Caco-2 (cell line): ENCODE measurements at regions of chr7 and their contacts with region 1.

Region 1: DNA sequence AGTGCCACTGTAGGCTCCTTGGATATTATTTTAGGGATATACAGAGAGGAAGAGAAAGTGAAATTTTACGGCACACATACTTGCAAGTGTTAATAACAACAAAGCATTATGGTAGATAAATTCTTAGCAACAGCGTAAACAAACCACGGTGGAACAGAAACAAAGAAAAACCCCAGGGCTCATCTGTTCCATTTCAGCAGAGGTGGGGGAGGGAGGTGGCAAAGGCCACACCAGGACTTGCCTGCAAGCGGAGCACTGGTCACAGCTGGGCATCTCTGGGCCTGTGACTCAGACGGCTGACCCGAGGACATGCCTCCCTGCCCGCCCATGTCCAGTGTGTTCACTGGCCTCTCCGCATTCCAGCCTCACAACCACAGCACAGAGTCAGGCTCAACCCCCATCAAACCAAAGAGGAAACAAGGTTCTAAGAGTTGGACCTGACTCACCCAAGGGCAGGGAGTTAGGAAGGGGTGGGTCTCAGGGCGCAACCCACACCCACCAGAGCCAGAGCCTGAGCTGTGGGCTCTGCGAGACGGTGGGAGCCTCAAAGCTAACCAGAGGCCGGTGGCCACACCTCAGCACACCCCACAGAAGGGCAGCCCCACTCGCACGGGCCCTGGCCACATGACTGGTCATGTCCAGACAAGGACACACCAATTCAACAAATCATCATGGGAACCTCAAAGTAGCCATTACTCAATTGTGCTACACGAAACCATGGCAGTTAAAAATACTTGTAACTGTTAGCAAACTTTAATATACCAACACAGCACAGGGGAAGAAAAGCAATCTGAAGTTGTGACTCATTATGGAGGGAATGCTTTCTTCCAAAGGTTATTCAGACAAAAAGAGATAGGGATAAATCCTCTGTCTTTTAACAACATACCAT is 10.7 kb downstream of the ESYT2 start:
- DNase-seq: peak; percentile 89 to 93
- H3K4me3 ChIP-seq: peak overlapping the region; percentile 6; the same call in 1 of the 2 replicates
- H3K4me3 Mint-ChIP-seq: peak overlapping the region; percentile 55
- H3K27ac Mint-ChIP-seq: peak overlapping the region; percentile 94
- H3K4me1 ChIP-seq: peaks cover 70% of the 10 kb centered on the region
- H3K4me1 Mint-ChIP-seq: peaks cover 71% of the 10 kb centered on the region
- H3K27me3 ChIP-seq: no peaks in the 10 kb centered on the region
- H3K27me3 Mint-ChIP-seq: no peaks in the 10 kb centered on the region
- CTCF ChIP-seq: no peak

Region 2: GRCh38 chr7:158782761-158783401 is 35.7 kb before region 1 on chr7:
- CTCF ChIA-PET with region 1: interaction called, 3 read pairs
- POLR2A ChIA-PET with region 1: no interaction called
- intact Hi-C with region 1: loop called (anchors 5 kb)
- DNase-seq: peak; percentile 46 to 50
- H3K4me3 ChIP-seq: no peak overlapping the region
- H3K4me3 Mint-ChIP-seq: no peak overlapping the region
- H3K27ac Mint-ChIP-seq: no peak overlapping the region
- H3K4me1 ChIP-seq: peaks cover 16% of the 10 kb centered on the region
- H3K4me1 Mint-ChIP-seq: no peaks in the 10 kb centered on the region
- H3K27me3 ChIP-seq: no peaks in the 10 kb centered on the region
- H3K27me3 Mint-ChIP-seq: no peaks in the 10 kb centered on the region
- CTCF ChIP-seq: peak in 1 of 2 experiments; percentile 31

Region 3: GRCh38 chr7:158802473-158803202 is 15.9 kb before region 1 on chr7:
- CTCF ChIA-PET with region 1: no interaction called
- POLR2A ChIA-PET with region 1: no interaction called
- intact Hi-C with region 1: loop called (anchors 2 kb)
- DNase-seq: no peak
- H3K4me3 ChIP-seq: no peak overlapping the region
- H3K4me3 Mint-ChIP-seq: peak overlapping the region; percentile 24
- H3K27ac Mint-ChIP-seq: peak overlapping the region; percentile 83
- H3K4me1 ChIP-seq: peaks cover 22% of the 10 kb centered on the region
- H3K4me1 Mint-ChIP-seq: no peaks in the 10 kb centered on the region
- H3K27me3 ChIP-seq: no peaks in the 10 kb centered on the region
- H3K27me3 Mint-ChIP-seq: no peaks in the 10 kb centered on the region
- CTCF ChIP-seq: no peak

Region 4: GRCh38 chr7:158829342-158830210 is 11.0 kb after region 1 on chr7 and contains the start of gene ESYT2:
- CTCF ChIA-PET with region 1: interaction called, 3 read pairs
- POLR2A ChIA-PET with region 1: interaction called, 4 read pairs
- intact Hi-C with region 1: loop called (anchors 1 kb)
- DNase-seq: peak; percentile 98 to 99
- H3K4me3 ChIP-seq: peak within 1 kb of the TSS; percentile 100
- H3K4me3 Mint-ChIP-seq: peak within 1 kb of the TSS; percentile 83
- H3K27ac Mint-ChIP-seq: peak within 1 kb of the TSS; percentile 79
- H3K4me1 ChIP-seq: peaks cover 9% of the 10 kb centered on the region; the same call in 1 of the 2 replicates
- H3K4me1 Mint-ChIP-seq: peaks cover 12% of the 10 kb centered on the region
- H3K27me3 ChIP-seq: no peaks in the 10 kb centered on the region
- H3K27me3 Mint-ChIP-seq: no peaks in the 10 kb centered on the region
- CTCF ChIP-seq: peak in 1 of 2 experiments; percentile 43
- total RNA-seq, gene ESYT2: 55.2 and 59.4 TPM in 2 replicates

Region 5: DNA sequence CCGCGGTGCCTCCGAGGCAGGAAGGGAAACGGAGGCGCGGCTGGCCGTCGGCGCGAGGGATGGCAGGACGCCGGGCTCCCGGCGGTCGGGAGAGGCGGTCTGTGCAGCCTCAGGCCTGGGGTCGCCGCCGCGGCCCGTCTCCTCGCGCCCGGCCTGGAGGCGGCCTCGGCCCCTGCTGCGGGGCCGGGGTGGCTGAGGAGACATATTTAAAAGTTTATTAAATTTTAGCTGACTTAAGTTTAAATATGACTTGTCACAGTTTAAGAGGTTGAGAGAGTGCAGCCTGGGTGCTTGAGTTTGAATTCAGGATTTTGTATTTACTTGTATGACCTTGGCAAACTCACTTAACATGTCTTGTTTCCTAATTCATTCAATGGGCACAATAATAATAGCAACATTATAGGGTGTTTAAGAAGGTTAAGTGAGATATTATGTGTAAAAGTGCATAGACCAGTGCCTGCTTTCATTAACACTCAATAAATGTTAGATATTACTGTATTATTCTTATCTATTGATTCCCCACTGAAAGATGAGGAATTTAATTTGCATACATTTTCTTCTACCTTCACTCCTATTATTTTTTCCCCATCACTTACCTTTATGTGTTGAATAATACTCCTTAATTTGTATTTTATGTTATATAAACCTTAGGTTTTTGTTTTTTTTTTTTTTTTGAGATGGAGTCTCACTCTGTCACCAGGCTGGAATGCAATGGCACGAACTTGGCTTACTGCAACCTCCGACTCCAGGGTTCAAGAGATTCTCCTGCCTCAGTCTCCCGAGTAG is 38.5 kb after region 1 on chr7:
- CTCF ChIA-PET with region 1: no interaction called
- POLR2A ChIA-PET with region 1: no interaction called
- intact Hi-C with region 1: loop called (anchors 1 kb)
- DNase-seq: no peak
- H3K4me3 ChIP-seq: peak overlapping the region; percentile 87
- H3K4me3 Mint-ChIP-seq: peak overlapping the region; percentile 99
- H3K27ac Mint-ChIP-seq: peak overlapping the region; percentile 97
- H3K4me1 ChIP-seq: peaks cover 5% of the 10 kb centered on the region; the same call in 1 of the 2 replicates
- H3K4me1 Mint-ChIP-seq: peaks cover 6% of the 10 kb centered on the region
- H3K27me3 ChIP-seq: no peaks in the 10 kb centered on the region
- H3K27me3 Mint-ChIP-seq: no peaks in the 10 kb centered on the region
- CTCF ChIP-seq: no peak

Region 6: DNA sequence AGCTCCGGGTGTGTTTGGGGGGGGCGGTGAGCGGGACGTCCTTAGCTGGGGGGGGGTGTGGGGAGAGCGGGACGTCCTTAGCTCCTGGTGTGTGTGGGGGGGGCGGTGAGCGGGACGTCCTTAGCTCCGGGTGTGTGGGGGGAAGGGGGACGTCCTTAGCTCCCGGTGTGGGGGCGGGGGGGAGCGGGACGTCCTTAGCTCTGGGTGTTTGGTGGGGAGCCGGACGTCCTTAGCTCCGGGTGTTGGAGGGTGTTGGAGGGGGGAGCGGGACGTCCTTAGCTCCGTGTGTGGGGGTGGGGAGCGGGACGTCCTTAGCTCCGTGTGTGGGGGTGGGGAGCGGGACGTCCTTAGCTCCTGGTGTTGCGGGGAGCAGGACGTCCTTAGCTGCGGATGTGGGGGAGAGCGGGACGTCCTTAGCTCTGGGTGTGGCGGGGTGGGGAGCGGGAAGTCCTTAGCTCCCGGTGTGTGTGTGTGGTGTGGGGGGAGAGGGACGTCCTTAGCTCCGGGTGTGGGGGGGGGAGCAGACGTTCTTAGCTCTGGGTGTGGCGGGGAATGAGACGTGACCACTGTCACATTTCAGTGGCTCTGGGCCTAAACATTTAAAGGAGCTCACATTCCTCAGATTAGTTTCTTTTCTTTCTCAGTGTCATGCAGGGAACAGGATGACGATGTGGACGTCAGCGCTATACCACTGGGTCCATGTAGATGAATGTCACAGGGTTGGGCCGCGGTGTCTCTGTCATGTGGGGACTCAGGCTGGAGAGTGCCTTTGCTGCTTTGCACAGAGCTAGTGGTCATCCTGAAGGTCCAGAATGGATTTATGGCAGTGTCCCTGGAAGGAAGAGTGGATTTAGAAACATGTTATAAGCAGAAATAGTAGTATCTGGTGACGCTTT is 45.3 kb after region 1 on chr7:
- CTCF ChIA-PET with region 1: interaction called, 4 read pairs
- POLR2A ChIA-PET with region 1: interaction called, 3 read pairs
- intact Hi-C with region 1: loop called (anchors 2 kb)
- DNase-seq: peak; percentile 41 to 78
- H3K4me3 ChIP-seq: peak overlapping the region; percentile 57
- H3K4me3 Mint-ChIP-seq: peak overlapping the region; percentile 89
- H3K27ac Mint-ChIP-seq: peak overlapping the region; percentile 95
- H3K4me1 ChIP-seq: peaks cover 14% of the 10 kb centered on the region
- H3K4me1 Mint-ChIP-seq: peaks cover 17% of the 10 kb centered on the region
- H3K27me3 ChIP-seq: no peaks in the 10 kb centered on the region
- H3K27me3 Mint-ChIP-seq: no peaks in the 10 kb centered on the region
- CTCF ChIP-seq: no peak